ENCODE measurements at regions of chr7 and their contacts with region 1.

Region 1: GRCh38 chr7:123154231-123154860 is 45.4 kb downstream of the SLC13A1 start:
- DNase-seq: peak; percentile 95
- H3K4me3 ChIP-seq: no peak overlapping the region
- H3K27ac ChIP-seq: peak overlapping the region; percentile 43
- H3K4me1 ChIP-seq: peaks cover 37% of the 10 kb centered on the region
- H3K27me3 ChIP-seq: no peaks in the 10 kb centered on the region
- CTCF ChIP-seq: peak; percentile 89

Region 2: DNA sequence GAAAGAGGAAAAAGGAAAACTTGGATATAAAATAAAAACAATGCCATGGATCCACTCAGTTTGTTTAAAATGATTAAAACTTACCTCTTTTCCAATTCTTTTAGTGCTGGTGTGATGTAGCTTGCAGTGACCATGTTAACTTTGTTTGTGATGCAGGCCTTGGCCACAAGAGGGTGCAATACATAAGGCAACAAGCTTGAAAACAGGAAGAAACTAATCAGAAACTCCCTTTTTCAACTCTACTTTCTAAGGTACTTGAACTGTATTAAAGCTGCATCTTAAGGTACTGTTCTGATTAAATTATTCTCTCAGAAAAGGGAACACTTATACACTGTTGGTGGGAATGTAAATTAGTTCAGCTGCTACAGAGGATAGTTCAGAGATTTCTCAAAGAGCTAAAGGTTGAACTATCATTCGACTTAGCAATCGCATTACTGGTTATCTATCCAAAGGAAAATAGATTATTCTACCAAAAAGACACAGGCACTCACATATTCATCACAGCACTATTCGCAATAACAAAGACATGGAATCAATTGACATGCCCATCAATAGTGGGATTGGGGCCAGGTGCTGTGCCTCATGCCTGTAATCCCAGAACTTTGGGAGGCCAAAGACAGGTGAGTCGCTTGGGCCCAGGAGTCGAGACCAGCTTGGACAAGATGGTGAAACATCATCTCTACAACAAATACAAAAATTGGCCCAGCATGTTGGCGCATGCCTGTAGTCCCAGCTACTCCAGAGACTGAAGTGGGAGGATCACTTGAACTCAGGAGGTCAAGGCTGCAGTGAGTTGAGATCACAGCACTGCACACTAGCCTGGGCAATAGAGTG is 1061.2 kb before region 1 on chr7:
- CTCF ChIA-PET with region 1: no interaction called
- POLR2A ChIA-PET with region 1: no interaction called
- intact Hi-C with region 1: loop called (anchors 10 kb)
- DNase-seq: peak; percentile 82
- H3K4me3 ChIP-seq: no peak overlapping the region
- H3K27ac ChIP-seq: no peak overlapping the region
- H3K4me1 ChIP-seq: no peaks in the 10 kb centered on the region
- H3K27me3 ChIP-seq: no peaks in the 10 kb centered on the region
- CTCF ChIP-seq: peak; percentile 93

Region 3: GRCh38 chr7:122803323-122803722 is 351.0 kb before region 1 on chr7:
- CTCF ChIA-PET with region 1: no interaction called
- POLR2A ChIA-PET with region 1: no interaction called
- intact Hi-C with region 1: loop called (anchors 5 kb)
- DNase-seq: peak; percentile 86
- H3K4me3 ChIP-seq: no peak overlapping the region
- H3K27ac ChIP-seq: peak overlapping the region; percentile 72
- H3K4me1 ChIP-seq: peaks cover 54% of the 10 kb centered on the region
- H3K27me3 ChIP-seq: no peaks in the 10 kb centered on the region
- CTCF ChIP-seq: peak; percentile 70

Region 4: GRCh38 chr7:122869260-122869659 is 285.1 kb before region 1 on chr7:
- CTCF ChIA-PET with region 1: no interaction called
- POLR2A ChIA-PET with region 1: no interaction called
- intact Hi-C with region 1: no loop called
- DNase-seq: no peak
- H3K4me3 ChIP-seq: no peak overlapping the region
- H3K27ac ChIP-seq: no peak overlapping the region
- H3K4me1 ChIP-seq: peaks cover 12% of the 10 kb centered on the region
- H3K27me3 ChIP-seq: no peaks in the 10 kb centered on the region
- CTCF ChIP-seq: no peak

Region 5: DNA sequence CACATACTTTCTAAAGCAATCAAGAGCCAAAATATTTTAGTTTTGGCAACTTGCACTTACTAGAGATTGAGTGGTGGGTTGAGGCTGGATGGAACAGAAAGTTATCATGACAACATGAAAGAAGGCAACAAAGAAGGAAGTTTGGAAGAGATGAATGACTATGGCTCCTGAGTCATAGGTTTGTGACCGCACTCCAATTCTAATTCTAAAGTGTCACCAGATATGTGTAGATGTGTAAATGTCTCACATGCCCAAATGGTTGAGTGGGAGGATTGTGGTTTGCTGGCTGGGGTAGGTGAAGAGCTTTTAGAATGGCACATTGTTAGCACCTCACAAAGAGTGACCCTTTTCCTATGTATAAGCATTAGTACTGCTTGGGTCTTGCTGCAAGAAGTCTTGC is 179.0 kb before region 1 on chr7:
- CTCF ChIA-PET with region 1: interaction called, 8 read pairs
- POLR2A ChIA-PET with region 1: no interaction called
- intact Hi-C with region 1: loop called (anchors 1 kb)
- DNase-seq: no peak
- H3K4me3 ChIP-seq: no peak overlapping the region
- H3K27ac ChIP-seq: peak overlapping the region; percentile 35
- H3K4me1 ChIP-seq: peaks cover 36% of the 10 kb centered on the region
- H3K27me3 ChIP-seq: no peaks in the 10 kb centered on the region
- CTCF ChIP-seq: no peak

Region 6: DNA sequence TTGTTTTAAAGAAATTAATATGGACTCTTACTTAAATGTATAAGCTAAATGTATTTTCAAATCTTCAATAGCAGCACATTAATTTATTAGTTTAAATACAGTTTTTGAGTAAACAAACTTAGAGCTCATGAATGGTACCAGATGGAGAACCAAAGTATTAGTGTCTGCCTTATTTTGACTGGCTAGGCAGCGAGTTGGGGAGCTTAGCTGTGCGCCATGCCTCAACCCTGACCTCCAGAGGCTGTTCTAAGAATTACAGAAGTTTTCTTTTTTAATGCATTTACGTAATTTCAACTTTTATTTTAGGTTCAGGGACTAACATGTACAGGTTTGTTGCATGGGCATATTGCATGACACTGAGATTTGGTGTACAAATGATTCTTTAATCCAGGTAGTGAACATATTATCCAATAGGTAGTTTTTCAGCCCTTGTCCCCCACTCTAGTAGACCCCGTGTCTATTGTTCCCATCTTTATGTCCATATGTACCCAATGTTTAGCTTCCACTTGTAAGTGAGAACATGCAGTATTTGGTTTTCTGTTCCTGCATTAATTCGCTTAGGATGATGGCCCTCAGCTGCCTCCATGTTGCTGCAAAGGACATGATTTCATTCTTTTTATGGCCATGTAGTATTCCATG is 213.3 kb after region 1 on chr7:
- CTCF ChIA-PET with region 1: interaction called, 3 read pairs
- POLR2A ChIA-PET with region 1: no interaction called
- intact Hi-C with region 1: loop called (anchors 2 kb)
- DNase-seq: peak; percentile 76
- H3K4me3 ChIP-seq: no peak overlapping the region
- H3K27ac ChIP-seq: no peak overlapping the region
- H3K4me1 ChIP-seq: peaks cover 8% of the 10 kb centered on the region
- H3K27me3 ChIP-seq: no peaks in the 10 kb centered on the region
- CTCF ChIP-seq: peak; percentile 88

Measured in A673 (cell line).